Activated CD4-positive, alpha-beta T cell treated with anti-CD3 and anti-CD28 coated beads for 36 hours (primary cell): ENCODE measurements at regions of chr1 and their contacts with region 1.

Region 1: DNA sequence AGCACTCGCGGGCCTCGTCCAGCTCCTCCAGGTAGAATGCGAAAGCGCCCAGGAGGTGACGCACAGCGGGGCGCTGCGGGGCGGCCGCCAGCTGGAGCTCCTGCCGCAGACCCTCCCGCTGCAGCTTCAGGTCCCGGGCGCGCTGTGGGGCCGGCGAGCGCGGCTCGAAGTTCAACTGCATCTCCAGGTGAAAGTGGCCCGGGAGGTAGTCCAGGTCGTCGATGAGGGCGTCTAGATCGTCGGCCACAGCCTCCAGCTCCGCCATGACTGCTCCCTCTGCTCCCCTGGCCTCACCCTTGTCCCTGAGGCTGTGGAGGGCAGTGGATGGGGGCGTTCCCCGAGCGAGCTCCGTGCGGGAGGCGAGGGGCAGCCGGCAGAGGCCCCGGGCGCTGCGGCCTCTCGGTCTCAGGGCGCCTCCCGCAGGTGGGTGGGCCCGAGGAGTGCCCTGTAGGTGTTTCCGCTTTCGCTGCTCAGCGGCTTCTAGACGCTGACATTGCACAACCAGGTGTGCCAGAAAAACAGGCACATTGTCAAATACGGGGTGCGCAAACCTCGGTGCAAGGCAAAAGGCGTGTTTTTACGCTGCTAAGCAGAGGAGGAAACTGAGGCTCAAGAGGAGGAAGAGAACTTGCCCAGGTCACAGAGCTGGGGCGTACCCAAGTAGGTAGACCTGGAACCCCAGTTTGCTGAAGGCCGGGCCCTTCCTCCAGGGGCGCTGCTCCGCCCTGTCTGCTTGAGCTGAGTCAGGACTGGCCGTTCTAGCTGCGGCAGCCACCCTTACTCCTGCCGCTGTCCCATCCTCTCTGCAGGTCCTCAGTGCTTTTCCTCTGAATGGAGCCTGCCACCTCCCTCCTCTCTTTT is at the start of gene TTC22:
- DNase-seq: peak; percentile 87
- ATAC-seq: peak; percentile 60
- H3K4me3 Mint-ChIP-seq: peak within 1 kb of the TSS; percentile 77
- H3K27ac Mint-ChIP-seq: peak within 1 kb of the TSS; percentile 86
- H3K4me1 Mint-ChIP-seq: peaks cover 55% of the 10 kb centered on the region
- H3K27me3 Mint-ChIP-seq: no peaks in the 10 kb centered on the region
- total RNA-seq, gene TTC22: 4.1 to 4.2 TPM

Region 2: GRCh38 chr1:54287176-54287650 is 513.9 kb before region 1 on chr1:
- CTCF ChIA-PET with region 1: no interaction called
- POLR2A ChIA-PET with region 1: no interaction called
- intact Hi-C with region 1: loop called in 1 of 2 experiments (anchors 5 kb)
- DNase-seq: peak; percentile 90
- ATAC-seq: peak; percentile 88
- H3K4me3 Mint-ChIP-seq: peak overlapping the region; percentile 59
- H3K27ac Mint-ChIP-seq: peak overlapping the region; percentile 97
- H3K4me1 Mint-ChIP-seq: peaks cover 94% of the 10 kb centered on the region
- H3K27me3 Mint-ChIP-seq: no peaks in the 10 kb centered on the region

Region 3: GRCh38 chr1:54406339-54407153 is 394.6 kb before region 1 on chr1 and contains the start of gene SSBP3:
- CTCF ChIA-PET with region 1: no interaction called
- POLR2A ChIA-PET with region 1: no interaction called
- intact Hi-C with region 1: loop called in 1 of 2 experiments (anchors 2 kb)
- DNase-seq: peak; percentile 95
- ATAC-seq: peak; percentile 84
- H3K4me3 Mint-ChIP-seq: peak within 1 kb of the TSS; percentile 76
- H3K27ac Mint-ChIP-seq: peak within 1 kb of the TSS; percentile 88
- H3K4me1 Mint-ChIP-seq: peaks cover 57% of the 10 kb centered on the region
- H3K27me3 Mint-ChIP-seq: no peaks in the 10 kb centered on the region
- total RNA-seq, gene SSBP3: 40.3 to 64.2 TPM

Region 4: DNA sequence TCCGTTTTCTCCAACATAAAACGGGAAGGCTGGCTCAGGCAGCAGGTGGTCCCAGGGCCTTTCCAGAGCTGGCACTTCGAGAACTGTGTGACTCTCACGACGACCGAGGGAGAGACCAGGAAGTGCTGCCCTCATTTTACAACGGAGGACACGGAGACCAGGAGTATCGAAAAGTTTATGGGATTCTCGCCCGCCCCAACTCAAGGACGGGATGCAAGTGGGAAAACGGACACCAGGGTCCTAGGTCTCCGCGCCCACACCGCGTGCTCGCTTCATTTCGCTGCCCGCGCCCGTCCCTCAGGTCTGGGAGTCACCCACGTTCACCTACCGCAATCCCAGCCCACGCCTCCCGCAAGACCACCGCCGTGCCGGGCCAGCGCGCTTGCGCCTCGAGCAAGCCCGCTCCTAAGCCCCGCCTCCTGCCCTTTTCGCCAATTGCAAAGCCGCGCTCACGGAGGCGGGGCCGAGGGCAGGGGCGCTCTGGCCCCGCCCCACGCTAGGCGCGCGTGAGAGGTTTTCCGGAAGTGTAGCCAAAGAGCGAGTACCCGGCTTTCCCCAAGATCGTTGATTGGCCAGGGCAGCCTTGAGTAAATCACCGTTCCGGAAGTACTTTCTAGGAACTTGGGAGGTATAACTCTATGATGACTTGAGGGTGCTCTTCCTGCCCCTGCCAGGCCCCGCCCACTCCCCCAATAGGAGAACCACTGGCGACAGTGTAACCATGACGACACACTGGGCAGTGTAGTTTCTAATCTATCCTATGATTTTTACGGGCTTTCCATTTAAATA is 36.8 kb before region 1 on chr1 and contains the start of gene PARS2:
- CTCF ChIA-PET with region 1: interaction called, 7 read pairs
- POLR2A ChIA-PET with region 1: interaction called, 3 read pairs
- intact Hi-C with region 1: loop called (anchors 1 kb)
- DNase-seq: peak; percentile 98
- ATAC-seq: peak; percentile 99
- H3K4me3 Mint-ChIP-seq: peak within 1 kb of the TSS; percentile 89
- H3K27ac Mint-ChIP-seq: peak within 1 kb of the TSS; percentile 91
- H3K4me1 Mint-ChIP-seq: peaks cover 13% of the 10 kb centered on the region
- H3K27me3 Mint-ChIP-seq: no peaks in the 10 kb centered on the region
- total RNA-seq, gene PARS2: 6.3 to 6.8 TPM

Region 5: DNA sequence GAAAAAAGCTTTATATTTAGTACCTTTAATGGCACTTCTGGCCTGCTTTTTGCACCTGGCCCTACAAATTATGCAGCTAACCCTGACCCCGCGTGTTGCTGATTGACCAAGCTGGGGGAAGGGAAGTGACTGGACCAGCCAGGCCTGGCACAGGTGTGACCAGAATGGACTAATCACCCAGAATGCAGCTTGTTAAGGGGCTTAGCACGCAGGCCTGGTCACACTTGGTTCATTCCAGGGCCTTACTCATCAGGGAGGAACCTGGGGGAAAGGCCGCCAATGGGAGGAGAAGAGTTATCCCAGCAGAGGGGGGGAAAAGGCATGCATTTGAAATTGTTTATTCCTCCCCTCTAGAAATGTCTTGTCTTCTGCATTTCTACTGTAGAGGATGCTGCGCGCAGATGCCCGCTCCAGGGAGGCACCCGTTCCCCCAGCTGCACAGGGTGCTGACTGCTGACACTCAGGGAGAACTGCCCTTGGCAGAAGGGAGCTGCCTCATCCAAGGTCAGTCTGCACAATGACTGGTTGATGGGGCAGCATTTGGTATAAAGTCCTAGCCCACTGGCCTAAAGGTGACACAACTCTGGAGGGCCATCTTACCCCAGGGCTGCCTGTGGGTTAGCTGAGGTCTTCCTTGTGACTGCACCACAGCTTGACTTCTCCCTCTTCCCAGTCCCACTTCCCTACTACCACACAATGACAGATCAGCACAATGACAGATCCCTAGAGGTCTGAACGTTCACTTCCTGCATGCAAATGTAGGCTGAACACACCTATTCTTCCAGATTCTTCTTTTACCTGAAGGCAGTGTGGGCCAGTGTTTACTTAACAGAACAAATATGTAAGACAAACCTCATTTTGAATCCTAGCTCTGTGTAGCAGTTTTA is 56.9 kb after region 1 on chr1:
- CTCF ChIA-PET with region 1: no interaction called
- POLR2A ChIA-PET with region 1: no interaction called
- intact Hi-C with region 1: no loop called
- DNase-seq: no peak
- ATAC-seq: no peak
- H3K4me3 Mint-ChIP-seq: no peak overlapping the region
- H3K27ac Mint-ChIP-seq: no peak overlapping the region
- H3K4me1 Mint-ChIP-seq: no peaks in the 10 kb centered on the region
- H3K27me3 Mint-ChIP-seq: no peaks in the 10 kb centered on the region

Region 6: GRCh38 chr1:54874079-54874830 is 73.1 kb after region 1 on chr1:
- CTCF ChIA-PET with region 1: no interaction called
- POLR2A ChIA-PET with region 1: no interaction called
- intact Hi-C with region 1: no loop called
- DNase-seq: no peak
- ATAC-seq: no peak
- H3K4me3 Mint-ChIP-seq: no peak overlapping the region
- H3K27ac Mint-ChIP-seq: no peak overlapping the region
- H3K4me1 Mint-ChIP-seq: peaks cover 3% of the 10 kb centered on the region
- H3K27me3 Mint-ChIP-seq: no peaks in the 10 kb centered on the region

Region 7: DNA sequence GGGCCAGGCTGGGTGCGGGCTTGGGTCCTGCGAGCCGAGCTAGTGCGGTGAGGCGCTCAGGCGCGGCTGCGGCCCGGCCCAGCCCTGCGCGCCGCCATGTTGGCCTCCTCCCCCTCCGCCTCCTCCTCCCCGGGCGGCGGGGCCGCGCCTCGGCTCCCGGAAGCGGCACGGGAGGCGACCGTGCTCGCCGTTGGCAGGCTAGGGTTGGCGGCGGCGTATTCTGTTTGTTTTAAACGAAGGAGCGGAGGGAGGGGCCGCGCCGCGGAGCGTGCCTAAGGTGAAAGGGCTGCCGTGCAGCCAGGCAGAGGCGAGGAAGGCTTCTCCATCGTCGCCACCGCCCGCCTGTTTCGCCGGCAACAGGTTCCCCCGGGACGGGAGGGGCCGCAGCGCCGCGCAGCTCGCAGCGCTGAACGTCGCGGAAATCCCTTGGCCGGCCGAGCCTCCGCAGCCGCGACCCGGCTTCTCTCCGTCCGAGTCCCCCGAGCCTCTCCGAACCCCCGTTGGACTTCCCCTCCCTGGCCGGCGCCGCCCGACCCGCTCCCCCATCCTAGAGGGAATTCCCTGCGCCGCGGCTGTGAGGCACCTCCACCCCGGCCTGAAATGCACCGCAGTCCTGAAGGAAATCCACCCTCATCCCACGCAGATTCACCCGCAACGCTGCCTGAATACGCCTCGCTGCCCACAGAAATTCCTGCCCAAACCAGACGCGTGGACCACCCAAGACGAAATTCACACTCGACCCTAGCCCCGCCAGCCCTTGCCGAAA is 414.3 kb after region 1 on chr1 and contains the start of gene USP24:
- CTCF ChIA-PET with region 1: no interaction called
- POLR2A ChIA-PET with region 1: no interaction called
- intact Hi-C with region 1: loop called in 1 of 2 experiments (anchors 5 kb)
- DNase-seq: peak; percentile 90
- ATAC-seq: peak; percentile 84
- H3K4me3 Mint-ChIP-seq: peak within 1 kb of the TSS; percentile 97
- H3K27ac Mint-ChIP-seq: peak within 1 kb of the TSS; percentile 100
- H3K4me1 Mint-ChIP-seq: peaks cover 55% of the 10 kb centered on the region
- H3K27me3 Mint-ChIP-seq: no peaks in the 10 kb centered on the region
- total RNA-seq, gene USP24: 37.0 to 39.7 TPM

Region 8: GRCh38 chr1:55329091-55329490 is 528.0 kb after region 1 on chr1:
- CTCF ChIA-PET with region 1: no interaction called
- POLR2A ChIA-PET with region 1: no interaction called
- intact Hi-C with region 1: no loop called
- DNase-seq: no peak
- ATAC-seq: no peak
- H3K4me3 Mint-ChIP-seq: no peak overlapping the region
- H3K27ac Mint-ChIP-seq: no peak overlapping the region
- H3K4me1 Mint-ChIP-seq: no peaks in the 10 kb centered on the region
- H3K27me3 Mint-ChIP-seq: peaks cover 4% of the 10 kb centered on the region